ENCODE measurements at regions of chr3 and their contacts with region 1.

Region 1: GRCh38 chr3:77254967-77255831 is 215.3 kb downstream of the ROBO2 start:
- DNase-seq: peak; percentile 49 to 69
- H3K4me3 ChIP-seq: no peak overlapping the region
- H3K4me3 Mint-ChIP-seq: no peak overlapping the region
- H3K27ac Mint-ChIP-seq: no peak overlapping the region
- H3K4me1 ChIP-seq: no peaks in the 10 kb centered on the region
- H3K4me1 Mint-ChIP-seq: no peaks in the 10 kb centered on the region
- H3K27me3 ChIP-seq: no peaks in the 10 kb centered on the region
- H3K27me3 Mint-ChIP-seq: peaks cover 3% of the 10 kb centered on the region
- CTCF ChIP-seq: peak; percentile 53 to 70

Region 2: DNA sequence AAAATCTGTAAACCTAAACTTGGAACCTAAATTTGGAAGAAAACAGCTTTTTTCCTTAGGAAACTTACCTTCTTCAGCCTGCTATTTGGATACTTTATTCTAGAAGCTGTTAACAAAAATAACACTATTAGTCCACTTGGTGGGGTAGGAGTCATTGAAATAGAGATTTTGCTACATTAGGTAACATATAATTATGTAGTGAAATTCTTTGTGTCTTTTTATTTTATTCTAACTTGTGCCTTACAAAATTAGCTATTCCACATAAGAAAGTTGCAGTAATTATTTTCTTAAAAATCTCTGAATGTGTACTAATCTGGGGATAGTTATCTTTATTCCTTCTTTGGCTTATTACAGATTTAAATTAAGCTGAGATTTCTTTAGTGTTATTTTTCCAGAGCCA is 575.7 kb before region 1 on chr3:
- CTCF ChIA-PET with region 1: no interaction called
- POLR2A ChIA-PET with region 1: no interaction called
- intact Hi-C with region 1: loop called (anchors 1 kb)
- DNase-seq: no peak
- H3K4me3 ChIP-seq: no peak overlapping the region
- H3K4me3 Mint-ChIP-seq: no peak overlapping the region
- H3K27ac Mint-ChIP-seq: no peak overlapping the region
- H3K4me1 ChIP-seq: no peaks in the 10 kb centered on the region
- H3K4me1 Mint-ChIP-seq: no peaks in the 10 kb centered on the region
- H3K27me3 ChIP-seq: no peaks in the 10 kb centered on the region
- H3K27me3 Mint-ChIP-seq: no peaks in the 10 kb centered on the region
- CTCF ChIP-seq: no peak

Region 3: GRCh38 chr3:76753599-76753998 is 501.6 kb before region 1 on chr3:
- CTCF ChIA-PET with region 1: no interaction called
- POLR2A ChIA-PET with region 1: no interaction called
- intact Hi-C with region 1: loop called (anchors 1 kb)
- DNase-seq: no peak
- H3K4me3 ChIP-seq: no peak overlapping the region
- H3K4me3 Mint-ChIP-seq: no peak overlapping the region
- H3K27ac Mint-ChIP-seq: no peak overlapping the region
- H3K4me1 ChIP-seq: no peaks in the 10 kb centered on the region
- H3K4me1 Mint-ChIP-seq: peaks cover 6% of the 10 kb centered on the region
- H3K27me3 ChIP-seq: no peaks in the 10 kb centered on the region
- H3K27me3 Mint-ChIP-seq: no peaks in the 10 kb centered on the region
- CTCF ChIP-seq: peak in 1 of 2 experiments; percentile 43

Region 4: DNA sequence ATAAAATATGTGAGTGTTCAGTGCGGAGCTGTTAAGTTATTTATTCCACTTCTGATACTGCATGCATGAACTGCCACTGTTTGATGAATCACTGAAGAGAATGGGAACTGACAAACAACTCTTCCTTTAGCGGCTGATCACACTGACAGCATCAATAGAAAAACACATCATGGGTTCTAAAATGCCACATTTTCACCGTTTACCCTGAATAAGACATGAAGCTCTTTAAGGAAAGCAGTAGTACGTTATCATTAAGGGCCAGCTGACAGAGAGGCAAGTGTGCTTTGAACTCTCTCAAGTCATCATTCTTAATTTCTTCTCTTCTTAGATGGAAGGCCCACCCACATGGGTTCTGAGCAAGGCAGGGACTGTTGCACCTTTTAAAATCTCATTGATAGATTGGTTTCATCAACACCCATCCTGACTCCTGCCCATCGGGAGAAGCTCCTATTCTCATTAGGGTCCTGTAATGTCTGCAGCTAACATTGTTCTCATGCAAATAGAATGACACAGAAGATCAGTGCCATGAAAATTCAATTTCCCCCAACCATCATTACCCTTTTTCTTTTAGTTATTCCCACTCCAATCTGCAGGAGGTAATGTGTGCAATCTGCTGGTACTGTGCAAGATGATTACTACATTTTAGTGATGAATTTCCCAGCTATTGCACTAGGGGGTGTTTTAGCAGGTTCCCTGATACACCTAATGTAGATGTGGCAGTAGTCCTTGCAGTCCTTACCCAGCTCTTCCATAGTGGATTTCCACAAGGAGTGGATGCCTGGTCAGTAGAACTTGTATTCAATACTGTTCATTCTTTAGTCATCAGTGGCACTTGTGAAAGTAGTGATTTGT is 96.2 kb before region 1 on chr3:
- CTCF ChIA-PET with region 1: no interaction called
- POLR2A ChIA-PET with region 1: no interaction called
- intact Hi-C with region 1: loop called (anchors 1 kb)
- DNase-seq: peak in 1 of 2 experiments; percentile 19
- H3K4me3 ChIP-seq: no peak overlapping the region
- H3K4me3 Mint-ChIP-seq: no peak overlapping the region
- H3K27ac Mint-ChIP-seq: no peak overlapping the region
- H3K4me1 ChIP-seq: no peaks in the 10 kb centered on the region
- H3K4me1 Mint-ChIP-seq: no peaks in the 10 kb centered on the region
- H3K27me3 ChIP-seq: no peaks in the 10 kb centered on the region
- H3K27me3 Mint-ChIP-seq: no peaks in the 10 kb centered on the region
- CTCF ChIP-seq: peak in 1 of 2 experiments; percentile 8